Activated T-helper 1 cell treated with anti-CD3 and anti-CD28 coated beads, Interleukin-12 subunit alpha, Interleukin-12 subunit beta, Interleukin-2, Interleukin-4 antibody, amounts not matched to agents 30 ng/mL and 10 ng/mL and 1 ng/mL, durations not matched to agents 14 hours and 24 hours and 36 hours (primary cell): ENCODE measurements at regions of chr2 and their contacts with region 1.

Region 1: GRCh38 chr2:181683518-181684453 is 3.5 kb upstream of the NEUROD1 start:
- DNase-seq: no peak
- H3K4me3 Mint-ChIP-seq: peak overlapping the region; percentile 44
- H3K27ac Mint-ChIP-seq: no peak overlapping the region
- H3K4me1 Mint-ChIP-seq: peaks cover 31% of the 10 kb centered on the region
- H3K27me3 Mint-ChIP-seq: peaks cover 83% of the 10 kb centered on the region

Region 2: GRCh38 chr2:181289698-181290097 is 394.1 kb before region 1 on chr2:
- intact Hi-C with region 1: loop called (anchors 10 kb)
- DNase-seq: no peak
- H3K4me3 Mint-ChIP-seq: no peak overlapping the region
- H3K27ac Mint-ChIP-seq: no peak overlapping the region
- H3K4me1 Mint-ChIP-seq: peaks cover 6% of the 10 kb centered on the region
- H3K27me3 Mint-ChIP-seq: no peaks in the 10 kb centered on the region

Region 3: GRCh38 chr2:181656450-181657291 is 27.1 kb before region 1 on chr2 and contains the start of gene CERKL:
- intact Hi-C with region 1: loop called (anchors 2 kb)
- DNase-seq: no peak
- H3K4me3 Mint-ChIP-seq: peak within 1 kb of the TSS; percentile 79
- H3K27ac Mint-ChIP-seq: no peak within 1 kb of the TSS
- H3K4me1 Mint-ChIP-seq: peaks cover 9% of the 10 kb centered on the region
- H3K27me3 Mint-ChIP-seq: peaks cover 50% of the 10 kb centered on the region
- total RNA-seq, gene CERKL: not detected in 2 replicates

Region 4: DNA sequence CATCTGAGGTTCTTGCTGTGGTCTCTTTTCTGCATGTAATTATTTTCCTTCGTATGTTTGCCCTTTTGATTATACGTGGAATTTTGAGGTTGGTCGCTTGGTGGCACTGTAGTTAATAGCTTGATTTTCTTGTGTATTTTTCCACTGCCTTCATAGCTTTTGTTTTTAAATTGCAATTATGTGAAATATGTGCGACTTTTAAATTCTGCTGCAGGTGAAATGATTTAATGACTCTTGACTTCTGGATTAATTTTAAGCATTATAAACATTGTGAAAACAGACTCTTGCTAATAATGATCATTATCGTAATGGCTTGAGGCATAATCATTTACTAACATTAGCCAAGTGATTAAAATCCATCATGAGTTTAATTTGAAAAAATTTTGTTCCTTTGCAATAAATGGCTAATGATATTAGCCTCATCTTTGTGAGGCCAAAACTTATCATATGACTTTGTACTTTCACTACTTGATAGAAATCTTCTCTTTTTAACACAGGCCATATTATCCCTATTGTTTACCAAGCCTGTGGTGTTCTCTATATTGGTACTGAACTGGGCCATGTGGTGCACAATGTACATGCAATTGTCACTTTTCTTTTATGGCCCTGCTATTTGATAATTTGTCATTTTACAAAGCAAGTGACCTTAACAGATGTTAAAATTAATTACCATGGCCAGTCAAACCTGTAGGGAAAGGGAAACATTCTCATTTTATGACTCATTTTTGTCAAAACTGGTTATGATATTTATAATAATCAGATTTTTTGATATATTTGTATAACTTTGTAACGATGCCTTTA is 59.3 kb after region 1 on chr2:
- intact Hi-C with region 1: no loop called
- DNase-seq: no peak
- H3K4me3 Mint-ChIP-seq: no peak overlapping the region
- H3K27ac Mint-ChIP-seq: no peak overlapping the region
- H3K4me1 Mint-ChIP-seq: no peaks in the 10 kb centered on the region
- H3K27me3 Mint-ChIP-seq: peaks cover 12% of the 10 kb centered on the region